ENCODE measurements at regions of chr15 and their contacts with region 1.

Region 1: DNA sequence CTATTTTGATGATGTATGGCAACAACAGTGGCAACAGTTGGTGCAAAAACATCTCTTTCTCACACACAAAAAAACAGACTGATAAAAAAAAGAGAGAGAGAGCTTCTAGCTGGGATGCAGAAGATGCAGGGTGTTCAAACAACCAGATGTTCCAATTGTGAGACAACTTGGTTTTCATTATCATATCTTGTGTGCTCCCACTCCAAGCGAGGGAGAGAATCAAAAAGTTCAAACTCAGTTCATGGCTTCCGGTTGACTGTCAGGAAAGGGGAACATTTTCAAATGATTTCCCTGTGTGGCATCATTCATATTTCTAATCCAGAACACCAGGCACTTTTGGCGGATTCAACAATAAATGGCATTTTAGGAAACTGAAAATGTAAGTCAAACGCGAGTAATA is 72.1 kb downstream of the RSL24D1 start:
- DNase-seq: no peak
- H3K4me3 ChIP-seq: no peak overlapping the region
- H3K27ac ChIP-seq: peak overlapping the region in 1 of 2 donors; percentile 52
- H3K4me1 ChIP-seq: no peaks in the 10 kb centered on the region
- H3K27me3 ChIP-seq: no peaks in the 10 kb centered on the region
- CTCF ChIP-seq: no peak
- POLR2A ChIP-seq: no peak

Region 2: DNA sequence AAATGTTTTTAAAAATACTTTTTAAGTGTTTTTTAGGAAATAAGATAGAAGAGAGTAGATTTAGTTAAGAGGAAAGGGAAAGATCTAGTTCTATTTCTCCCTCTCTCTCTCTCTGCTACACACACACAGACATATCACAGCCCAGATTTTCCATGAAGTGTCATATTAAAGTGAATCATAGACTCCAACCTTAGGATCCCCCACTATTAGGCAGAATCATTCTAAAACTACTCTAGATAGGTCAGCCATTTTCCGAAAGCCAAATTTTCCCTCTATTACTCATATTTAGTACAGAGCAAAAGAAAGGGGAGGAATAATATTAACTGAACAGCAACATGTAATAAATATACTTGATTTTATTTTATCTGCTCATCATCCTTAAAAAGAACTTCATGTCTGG is 117.3 kb after region 1 on chr15:
- intact Hi-C with region 1: loop called (anchors 5 kb)
- DNase-seq: no peak
- H3K4me3 ChIP-seq: no peak overlapping the region
- H3K27ac ChIP-seq: no peak overlapping the region
- H3K4me1 ChIP-seq: no peaks in the 10 kb centered on the region
- H3K27me3 ChIP-seq: no peaks in the 10 kb centered on the region
- CTCF ChIP-seq: no peak
- POLR2A ChIP-seq: no peak

Measured in breast epithelium (tissue), 4 donors.